Activated T-helper 1 cell treated with anti-CD3 and anti-CD28 coated beads, Interleukin-12 subunit alpha, Interleukin-12 subunit beta, Interleukin-2, Interleukin-4 antibody, amounts not matched to agents 30 ng/mL and 10 ng/mL and 1 ng/mL, durations not matched to agents 14 hours and 24 hours and 36 hours (primary cell): ENCODE measurements at regions of chr6 and their contacts with region 1.

Region 1: DNA sequence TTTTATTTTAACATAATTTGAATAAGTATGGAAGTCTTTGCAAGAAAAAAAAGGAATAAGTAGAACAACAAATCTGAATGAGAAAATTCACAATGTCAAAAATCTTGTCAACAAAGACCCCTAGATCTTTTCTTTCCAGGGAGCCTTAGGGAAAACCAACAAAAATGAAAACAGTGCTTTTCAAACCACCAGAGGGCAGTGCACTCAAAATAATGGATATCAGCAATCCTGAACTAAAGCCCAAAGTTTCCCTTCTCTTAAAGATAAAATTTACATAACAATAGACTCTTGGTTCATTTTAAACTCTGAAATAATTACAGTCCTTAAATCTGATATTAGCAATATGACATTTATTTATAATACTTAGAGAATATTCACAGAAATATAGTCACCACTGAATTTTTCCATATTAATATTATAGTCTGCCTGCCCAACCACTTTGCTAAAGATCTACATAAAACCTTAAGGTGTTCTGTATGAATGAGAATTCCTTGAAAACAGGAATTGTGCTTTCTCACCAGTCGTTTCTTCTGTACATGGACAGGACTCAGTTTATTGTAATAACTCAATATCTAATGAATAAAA is 105.3 kb upstream of the BMP5 start:
- DNase-seq: no peak
- H3K4me3 Mint-ChIP-seq: no peak overlapping the region
- H3K27ac Mint-ChIP-seq: no peak overlapping the region
- H3K4me1 Mint-ChIP-seq: no peaks in the 10 kb centered on the region
- H3K27me3 Mint-ChIP-seq: no peaks in the 10 kb centered on the region

Region 2: GRCh38 chr6:56292505-56293181 is 311.9 kb after region 1 on chr6:
- intact Hi-C with region 1: loop called (anchors 5 kb)
- DNase-seq: no peak
- H3K4me3 Mint-ChIP-seq: no peak overlapping the region
- H3K27ac Mint-ChIP-seq: no peak overlapping the region
- H3K4me1 Mint-ChIP-seq: no peaks in the 10 kb centered on the region
- H3K27me3 Mint-ChIP-seq: no peaks in the 10 kb centered on the region